ENCODE measurements at regions of chr6 and their contacts with region 1.

Region 1: GRCh38 chr6:11496152-11497060 is 41.1 kb upstream of the TMEM170B start:
- DNase-seq: peak in 7 of 10 donors; percentile 25 to 84 (median 60)

Region 2: DNA sequence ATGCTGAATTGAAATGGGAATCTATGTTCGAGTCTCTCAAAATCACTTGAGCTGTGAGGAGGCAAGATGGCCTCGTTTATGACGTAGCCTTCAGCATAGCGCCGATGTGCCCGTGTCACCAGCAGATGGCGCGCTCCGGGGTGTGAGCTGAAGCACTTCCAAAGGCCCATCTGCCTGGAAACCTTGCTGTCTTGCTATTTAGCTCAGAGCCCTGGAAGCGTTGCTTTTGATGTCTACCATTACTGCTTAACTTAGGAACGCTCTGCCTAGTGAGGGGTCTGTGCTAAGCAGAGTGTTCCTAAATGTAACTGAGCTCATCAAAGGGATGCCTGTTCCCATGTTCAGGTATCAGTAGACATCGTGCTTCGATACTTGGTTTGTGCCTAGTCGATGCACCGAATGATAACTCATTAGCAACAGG is 541.8 kb before region 1 on chr6:
- intact Hi-C with region 1: loop called (anchors 10 kb)
- DNase-seq: peak in 9 of 10 donors; percentile 30 to 91 (median 68)

Region 3: GRCh38 chr6:11093589-11094410 is 402.6 kb before region 1 on chr6 and contains the start of gene SMIM13:
- intact Hi-C with region 1: loop called (anchors 1 kb)
- DNase-seq: peak; percentile 97 to 100 (median 99)

Region 4: DNA sequence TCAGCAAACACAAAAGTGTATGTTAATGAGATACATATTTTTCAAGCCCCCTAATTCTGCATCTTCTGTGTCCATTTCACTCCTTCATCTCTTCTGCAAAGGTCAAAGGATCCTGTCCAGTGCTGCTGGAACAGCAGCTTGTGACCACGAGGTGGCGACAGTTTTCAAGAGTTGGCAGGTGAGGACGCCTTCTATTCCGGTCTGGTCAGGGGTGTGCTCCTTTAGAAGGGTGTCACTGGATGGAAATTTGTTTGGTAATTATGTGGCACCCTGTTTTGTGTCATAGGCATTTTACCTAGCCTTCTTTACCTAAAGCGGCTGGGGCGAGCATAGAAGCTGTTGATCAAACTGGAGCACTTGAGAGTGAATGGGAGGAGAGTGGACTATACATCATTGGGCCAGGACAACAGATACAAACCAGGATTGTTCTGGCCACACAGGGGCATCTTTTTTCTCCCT is 352.0 kb before region 1 on chr6:
- intact Hi-C with region 1: loop called (anchors 1 kb)
- DNase-seq: peak; percentile 55 to 96 (median 82)

Region 5: GRCh38 chr6:11172501-11173332 is 323.7 kb before region 1 on chr6:
- intact Hi-C with region 1: loop called (anchors 10 kb)
- DNase-seq: peak in 8 of 10 donors; percentile 36 to 93 (median 72)

Region 6: GRCh38 chr6:11241793-11242201 is 254.6 kb before region 1 on chr6:
- intact Hi-C with region 1: loop called (anchors 5 kb)
- DNase-seq: peak in 9 of 10 donors; percentile 31 to 92 (median 54)

Region 7: GRCh38 chr6:11575408-11576033 is 79.1 kb after region 1 on chr6:
- intact Hi-C with region 1: loop called (anchors 5 kb)
- DNase-seq: peak in 6 of 10 donors; percentile 25 to 88 (median 50)

Region 8: DNA sequence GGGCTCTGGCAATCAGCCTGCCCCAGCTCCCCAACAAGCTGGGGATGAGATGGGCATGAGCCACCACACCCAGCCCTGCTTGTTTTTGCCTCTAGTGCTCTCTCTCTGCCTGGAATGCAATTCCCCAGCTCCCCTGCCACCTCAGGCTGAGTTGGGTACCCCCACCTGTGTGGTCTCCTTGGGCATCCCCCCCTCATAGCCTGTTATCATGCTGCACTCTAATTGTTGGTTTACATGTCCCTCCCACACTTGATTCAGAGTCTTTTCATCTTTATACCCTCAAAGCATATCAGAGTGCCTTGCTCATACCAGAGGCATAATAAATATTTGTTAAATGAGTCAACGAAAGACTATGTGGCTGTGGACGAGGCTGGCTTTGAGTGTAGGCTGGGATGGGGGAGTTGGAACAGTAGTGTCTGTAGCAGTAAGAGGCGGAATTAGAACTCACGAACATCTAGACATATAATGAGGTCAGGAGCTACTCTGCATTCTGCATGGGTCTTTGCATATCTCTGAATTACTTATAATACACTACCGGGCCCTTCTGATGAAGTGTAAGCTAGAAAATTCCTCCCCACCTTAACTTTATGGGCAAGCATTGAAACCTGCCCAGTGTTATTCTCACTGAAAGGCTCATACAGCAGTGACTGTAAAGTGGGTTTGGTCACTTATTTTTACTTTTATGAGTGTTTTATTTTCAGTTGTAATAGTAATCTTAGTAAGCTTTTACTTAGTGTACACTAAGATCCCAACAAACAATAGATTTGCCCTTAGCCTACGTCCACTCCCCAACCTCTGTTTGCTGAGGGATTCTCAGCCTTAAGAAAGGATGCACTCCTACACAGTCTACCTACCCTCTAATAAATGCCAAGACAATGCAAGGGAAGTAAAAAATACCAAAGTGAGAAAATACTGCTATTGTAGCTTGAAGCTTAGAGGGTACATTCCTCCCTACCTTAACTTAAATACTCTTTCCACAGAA is 852.4 kb after region 1 on chr6:
- intact Hi-C with region 1: no loop called
- DNase-seq: no peak

Measured in posterior cingulate gyrus (tissue), 11 donors.